ENCODE measurements at regions of chr17 and their contacts with region 1.

Region 1: GRCh38 chr17:73192894-73193701 is at the start of gene COG1:
- DNase-seq: peak; percentile 68 to 91 (median 76)
- H3K4me3 ChIP-seq: peak within 1 kb of the TSS; percentile 71 to 84
- H3K4me3 Mint-ChIP-seq: peak within 1 kb of the TSS; percentile 97 to 99 (median 98)
- H3K27ac ChIP-seq: peak within 1 kb of the TSS; percentile 81
- H3K27ac Mint-ChIP-seq: peak within 1 kb of the TSS; percentile 79 to 99 (median 98)
- H3K4me1 ChIP-seq: peaks cover 22% of the 10 kb centered on the region
- H3K4me1 Mint-ChIP-seq: peaks cover 21 to 45% (median 28%) of the 10 kb centered on the region in 4 donors
- H3K27me3 ChIP-seq: no peaks in the 10 kb centered on the region
- H3K27me3 Mint-ChIP-seq: no peaks in the 10 kb centered on the region
- total RNA-seq, gene COG1: 76.2 to 81.6 TPM

Region 2: GRCh38 chr17:73092523-73093135 is 100.5 kb before region 1 on chr17 and contains the start of gene SLC39A11:
- CTCF ChIA-PET with region 1: no interaction called
- POLR2A ChIA-PET with region 1: interaction called, 3 read pairs
- intact Hi-C with region 1: loop called (anchors 2 kb)
- DNase-seq: peak; percentile 87 to 93 (median 89)
- H3K4me3 ChIP-seq: peak within 1 kb of the TSS; percentile 26 to 55
- H3K4me3 Mint-ChIP-seq: peak within 1 kb of the TSS; percentile 90 to 99 (median 97)
- H3K27ac ChIP-seq: peak within 1 kb of the TSS; percentile 58
- H3K27ac Mint-ChIP-seq: peak within 1 kb of the TSS; percentile 62 to 98 (median 96)
- H3K4me1 ChIP-seq: peaks cover 27% of the 10 kb centered on the region
- H3K4me1 Mint-ChIP-seq: peaks cover 17 to 41% (median 29%) of the 10 kb centered on the region in 4 donors
- H3K27me3 ChIP-seq: no peaks in the 10 kb centered on the region
- H3K27me3 Mint-ChIP-seq: peaks cover 0 to 3% of the 10 kb centered on the region in 2 donors
- total RNA-seq, gene SLC39A11: 20.8 to 23.7 TPM

Region 3: GRCh38 chr17:73107191-73107590 is 85.9 kb before region 1 on chr17:
- CTCF ChIA-PET with region 1: no interaction called
- POLR2A ChIA-PET with region 1: no interaction called
- intact Hi-C with region 1: no loop called
- DNase-seq: no peak
- H3K4me3 ChIP-seq: no peak overlapping the region
- H3K4me3 Mint-ChIP-seq: no peak overlapping the region
- H3K27ac ChIP-seq: no peak overlapping the region
- H3K27ac Mint-ChIP-seq: no peak overlapping the region
- H3K4me1 ChIP-seq: no peaks in the 10 kb centered on the region
- H3K4me1 Mint-ChIP-seq: no peaks in the 10 kb centered on the region
- H3K27me3 ChIP-seq: no peaks in the 10 kb centered on the region
- H3K27me3 Mint-ChIP-seq: peaks cover 0 to 5% of the 10 kb centered on the region in 2 donors

Region 4: GRCh38 chr17:73311781-73312641 is 118.9 kb after region 1 on chr17 and contains the start of gene CDC42EP4:
- CTCF ChIA-PET with region 1: interaction called, 3 read pairs
- POLR2A ChIA-PET with region 1: interaction called, 5 read pairs
- intact Hi-C with region 1: loop called (anchors 1 kb)
- DNase-seq: peak; percentile 81 to 88 (median 81)
- H3K4me3 ChIP-seq: peak within 1 kb of the TSS; percentile 57 to 80
- H3K4me3 Mint-ChIP-seq: peak within 1 kb of the TSS; percentile 85 to 92 (median 88)
- H3K27ac ChIP-seq: peak within 1 kb of the TSS; percentile 63
- H3K27ac Mint-ChIP-seq: peak within 1 kb of the TSS; percentile 73 to 88 (median 82)
- H3K4me1 ChIP-seq: peaks cover 15% of the 10 kb centered on the region
- H3K4me1 Mint-ChIP-seq: peaks cover 6 to 19% (median 13%) of the 10 kb centered on the region in 4 donors
- H3K27me3 ChIP-seq: no peaks in the 10 kb centered on the region
- H3K27me3 Mint-ChIP-seq: no peaks in the 10 kb centered on the region
- total RNA-seq, gene CDC42EP4: 1.1 to 1.4 TPM

Measured in CD4-positive, alpha-beta memory T cell (primary cell).